B cell (primary cell): ENCODE measurements at regions of chr17 and their contacts with region 1.

Region 1: GRCh38 chr17:77140166-77140878 is 447 bp upstream of the SEC14L1 start:
- DNase-seq: peak; percentile 100
- ATAC-seq: peak; percentile 87
- H3K4me3 ChIP-seq: peak overlapping the region; percentile 36 to 62 (median 51)
- H3K4me3 Mint-ChIP-seq: peak overlapping the region; percentile 63
- H3K27ac ChIP-seq: peak overlapping the region; percentile 80 to 85
- H3K27ac Mint-ChIP-seq: peak overlapping the region; percentile 97
- H3K4me1 ChIP-seq: peaks cover 38 to 58% of the 10 kb centered on the region in 2 donors
- H3K4me1 Mint-ChIP-seq: peaks cover 51% of the 10 kb centered on the region
- H3K27me3 ChIP-seq: no peaks in the 10 kb centered on the region
- H3K27me3 Mint-ChIP-seq: no peaks in the 10 kb centered on the region
- CTCF ChIP-seq: no peak

Region 2: GRCh38 chr17:76737082-76737675 is 403.1 kb before region 1 on chr17 and contains the start of gene SRSF2:
- CTCF ChIA-PET with region 1: no interaction called
- POLR2A ChIA-PET with region 1: no interaction called
- intact Hi-C with region 1: loop called (anchors 5 kb)
- DNase-seq: peak; percentile 99
- ATAC-seq: peak; percentile 76
- H3K4me3 ChIP-seq: peak within 1 kb of the TSS; percentile 95 to 99 (median 97)
- H3K4me3 Mint-ChIP-seq: peak within 1 kb of the TSS; percentile 97
- H3K27ac ChIP-seq: peak within 1 kb of the TSS; percentile 95 to 97
- H3K27ac Mint-ChIP-seq: peak within 1 kb of the TSS; percentile 99
- H3K4me1 ChIP-seq: peaks cover 35 to 36% of the 10 kb centered on the region in 2 donors
- H3K4me1 Mint-ChIP-seq: peaks cover 53% of the 10 kb centered on the region
- H3K27me3 ChIP-seq: no peaks in the 10 kb centered on the region
- H3K27me3 Mint-ChIP-seq: no peaks in the 10 kb centered on the region
- CTCF ChIP-seq: no peak
- total RNA-seq, gene SRSF2: 356 and 362 TPM in 2 replicates

Region 3: GRCh38 chr17:77109764-77110359 is 30.5 kb before region 1 on chr17:
- CTCF ChIA-PET with region 1: interaction called, 6 read pairs
- POLR2A ChIA-PET with region 1: interaction called, 14 read pairs
- intact Hi-C with region 1: loop called (anchors 1 kb)
- DNase-seq: peak; percentile 58
- ATAC-seq: no peak
- H3K4me3 ChIP-seq: peak overlapping the region in 3 of 5 experiments; percentile 15 to 42 (median 18)
- H3K4me3 Mint-ChIP-seq: peak overlapping the region; percentile 78
- H3K27ac ChIP-seq: no peak overlapping the region
- H3K27ac Mint-ChIP-seq: peak overlapping the region; percentile 17
- H3K4me1 ChIP-seq: peaks cover 25 to 43% of the 10 kb centered on the region in 2 donors
- H3K4me1 Mint-ChIP-seq: peaks cover 47% of the 10 kb centered on the region
- H3K27me3 ChIP-seq: no peaks in the 10 kb centered on the region
- H3K27me3 Mint-ChIP-seq: no peaks in the 10 kb centered on the region
- CTCF ChIP-seq: no peak

Region 4: DNA sequence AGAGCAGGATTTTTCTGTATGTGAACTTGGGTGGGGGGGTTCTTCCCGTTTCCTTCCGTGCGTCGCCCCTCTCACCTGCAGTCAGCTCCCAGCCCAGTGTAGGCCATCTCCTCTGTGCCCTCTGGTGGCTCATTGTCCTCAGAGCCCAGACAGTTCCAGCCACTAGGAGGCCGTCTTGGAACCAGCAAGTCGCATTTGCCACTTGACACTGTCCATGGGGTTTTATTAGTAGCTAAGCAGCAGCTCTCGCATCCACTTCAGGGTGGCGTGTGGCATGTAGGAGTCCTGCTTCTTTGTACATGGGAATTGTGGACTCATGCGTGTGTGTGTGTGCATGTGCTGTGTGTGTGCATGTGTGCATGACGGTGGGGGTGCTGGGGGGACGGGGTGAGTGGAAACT is 74.4 kb after region 1 on chr17:
- CTCF ChIA-PET with region 1: interaction called, 4 read pairs
- POLR2A ChIA-PET with region 1: interaction called, 8 read pairs
- intact Hi-C with region 1: loop called (anchors 1 kb)
- DNase-seq: peak; percentile 24
- ATAC-seq: no peak
- H3K4me3 ChIP-seq: no peak overlapping the region
- H3K4me3 Mint-ChIP-seq: no peak overlapping the region
- H3K27ac ChIP-seq: no peak overlapping the region
- H3K27ac Mint-ChIP-seq: no peak overlapping the region
- H3K4me1 ChIP-seq: peaks cover 40 to 41% of the 10 kb centered on the region in 2 donors
- H3K4me1 Mint-ChIP-seq: peaks cover 53% of the 10 kb centered on the region
- H3K27me3 ChIP-seq: peaks cover 0 to 4% (median 0%) of the 10 kb centered on the region in 4 experiments
- H3K27me3 Mint-ChIP-seq: no peaks in the 10 kb centered on the region
- CTCF ChIP-seq: no peak

Region 5: DNA sequence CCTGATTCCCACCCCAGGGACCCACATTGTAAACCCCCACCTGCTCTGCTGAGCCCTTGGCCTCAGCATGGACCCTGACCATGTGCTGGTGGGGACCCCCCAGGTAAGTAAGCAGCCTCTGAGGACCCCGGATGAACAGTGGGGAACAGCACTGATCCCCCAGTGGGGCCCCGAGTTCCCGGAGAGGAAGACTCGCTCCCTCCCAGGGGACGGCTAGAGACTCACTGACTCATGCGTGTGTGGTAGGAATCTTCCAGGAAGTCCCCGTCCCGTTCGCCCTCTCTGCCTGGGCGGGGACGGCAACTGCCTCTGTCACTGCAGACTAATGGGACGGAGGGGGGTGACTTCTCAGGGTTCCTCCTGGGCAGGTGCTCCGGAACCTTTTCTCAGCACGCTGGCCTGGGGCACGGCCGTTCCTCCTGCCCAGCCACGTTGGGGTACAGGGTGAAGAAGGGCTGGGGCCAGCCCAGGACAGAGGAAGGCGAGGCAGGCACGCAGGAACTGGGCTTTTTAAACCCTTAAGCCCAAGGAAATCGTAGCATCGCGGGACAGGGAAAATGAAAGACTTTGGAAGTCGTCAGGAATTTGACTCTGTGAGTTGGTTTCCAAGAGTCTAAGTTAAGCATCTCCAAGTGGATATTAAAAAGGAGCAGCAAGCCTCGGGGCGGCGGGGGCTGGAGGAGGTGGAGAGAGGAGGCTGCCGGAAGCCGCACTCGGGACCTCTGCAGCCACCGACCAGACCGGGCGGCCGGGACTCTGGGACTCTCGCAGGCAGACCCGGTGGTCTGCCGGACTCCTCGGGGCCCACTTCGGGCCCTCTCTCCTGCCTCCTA is 179.1 kb after region 1 on chr17:
- CTCF ChIA-PET with region 1: no interaction called
- POLR2A ChIA-PET with region 1: no interaction called
- intact Hi-C with region 1: loop called (anchors 1 kb)
- DNase-seq: peak; percentile 84
- ATAC-seq: peak; percentile 34
- H3K4me3 ChIP-seq: peak overlapping the region in 4 of 5 experiments; percentile 16 to 51 (median 33)
- H3K4me3 Mint-ChIP-seq: peak overlapping the region; percentile 91
- H3K27ac ChIP-seq: peak overlapping the region; percentile 53 to 75
- H3K27ac Mint-ChIP-seq: peak overlapping the region; percentile 90
- H3K4me1 ChIP-seq: peaks cover 62 to 66% of the 10 kb centered on the region in 2 donors
- H3K4me1 Mint-ChIP-seq: peaks cover 65% of the 10 kb centered on the region
- H3K27me3 ChIP-seq: no peaks in the 10 kb centered on the region
- H3K27me3 Mint-ChIP-seq: no peaks in the 10 kb centered on the region
- CTCF ChIP-seq: no peak